CD8-positive, alpha-beta memory T cell (primary cell): ENCODE measurements at regions of chr11 and their contacts with region 1.

Region 1: DNA sequence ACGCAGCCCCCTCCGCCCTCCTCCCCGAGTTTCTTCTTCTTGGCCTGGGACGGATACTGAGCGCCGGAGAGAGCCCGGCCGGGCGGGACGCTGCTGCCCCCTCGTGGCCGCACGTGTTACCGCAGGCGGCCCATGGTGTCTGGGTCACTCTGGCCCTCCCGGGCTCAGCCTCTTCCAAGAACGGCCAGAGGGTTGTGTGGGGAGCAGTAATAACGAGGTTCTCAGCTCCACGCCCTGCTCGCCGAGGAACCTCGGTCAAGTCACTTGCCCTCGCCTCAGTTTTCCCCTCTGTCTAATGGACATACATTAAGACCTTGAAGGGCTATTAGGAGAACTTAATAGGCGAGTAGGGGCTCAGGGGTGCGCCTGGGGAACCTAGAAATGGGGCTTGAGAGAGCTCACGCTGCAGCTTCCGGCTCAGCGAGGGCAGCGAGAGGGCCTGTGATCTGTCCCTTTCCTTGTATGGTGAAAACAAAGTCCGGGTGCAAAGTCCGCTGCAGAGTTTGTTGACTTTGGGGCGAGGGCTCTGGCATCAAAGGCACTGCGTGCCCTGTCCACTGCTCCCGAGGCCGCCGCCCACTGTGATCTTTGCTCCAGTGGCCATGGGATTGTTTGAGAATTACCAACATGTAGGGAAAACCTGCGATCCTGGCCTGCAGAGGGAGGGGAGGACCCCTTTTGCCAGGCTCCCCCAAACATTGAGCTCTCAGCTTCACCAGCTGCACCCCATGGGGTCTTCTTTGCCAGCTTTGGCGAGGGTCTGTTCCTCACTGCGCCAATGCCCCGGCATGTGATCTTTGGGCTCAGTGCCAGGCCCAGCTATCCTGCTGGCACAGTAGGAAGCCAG is 14.4 kb upstream of the LRP5 start:
- DNase-seq: peak; percentile 56 to 74 (median 63)
- H3K4me3 ChIP-seq: no peak overlapping the region
- H3K4me3 Mint-ChIP-seq: no peak overlapping the region
- H3K27ac ChIP-seq: no peak overlapping the region
- H3K27ac Mint-ChIP-seq: no peak overlapping the region
- H3K4me1 ChIP-seq: no peaks in the 10 kb centered on the region
- H3K4me1 Mint-ChIP-seq: peaks cover 0 to 4% (median 0%) of the 10 kb centered on the region in 3 donors
- H3K27me3 ChIP-seq: no peaks in the 10 kb centered on the region
- H3K27me3 Mint-ChIP-seq: no peaks in the 10 kb centered on the region

Region 2: GRCh38 chr11:68038718-68039525 is 259.1 kb before region 1 on chr11 and contains the start of gene TCIRG1:
- CTCF ChIA-PET with region 1: no interaction called
- POLR2A ChIA-PET with region 1: no interaction called
- DNase-seq: peak; percentile 42 to 64 (median 48)
- H3K4me3 ChIP-seq: peak within 1 kb of the TSS; percentile 71
- H3K4me3 Mint-ChIP-seq: peak within 1 kb of the TSS; percentile 88 to 98 (median 92)
- H3K27ac ChIP-seq: peak within 1 kb of the TSS; percentile 92
- H3K27ac Mint-ChIP-seq: peak within 1 kb of the TSS; percentile 90 to 98 (median 95)
- H3K4me1 ChIP-seq: peaks cover 47% of the 10 kb centered on the region
- H3K4me1 Mint-ChIP-seq: peaks cover 21 to 40% (median 25%) of the 10 kb centered on the region in 3 donors
- H3K27me3 ChIP-seq: no peaks in the 10 kb centered on the region
- H3K27me3 Mint-ChIP-seq: no peaks in the 10 kb centered on the region
- total RNA-seq, gene TCIRG1: 108 to 126 TPM

Region 3: DNA sequence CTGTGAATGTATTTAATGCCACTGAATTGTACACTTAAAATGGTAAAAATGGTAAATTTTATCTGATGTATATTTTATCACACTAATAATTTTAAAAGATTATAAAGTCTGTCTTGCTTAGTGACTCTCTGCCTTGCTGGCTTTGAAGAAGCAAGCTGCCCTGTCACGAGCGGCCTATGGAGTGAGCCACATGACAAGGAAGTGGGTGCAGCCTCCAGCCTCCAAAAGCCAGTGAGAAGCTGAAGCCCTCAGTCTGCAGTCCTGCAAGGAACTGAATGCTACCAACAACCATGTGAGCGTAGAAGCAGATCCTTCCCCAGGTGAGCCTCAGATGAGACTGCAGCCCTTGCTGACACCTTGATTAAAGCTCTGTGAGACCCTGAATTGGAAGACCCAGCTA is 46.3 kb before region 1 on chr11:
- CTCF ChIA-PET with region 1: interaction called, 201 read pairs
- POLR2A ChIA-PET with region 1: interaction called, 3 read pairs
- DNase-seq: no peak
- H3K4me3 ChIP-seq: no peak overlapping the region
- H3K4me3 Mint-ChIP-seq: no peak overlapping the region
- H3K27ac ChIP-seq: no peak overlapping the region
- H3K27ac Mint-ChIP-seq: no peak overlapping the region
- H3K4me1 ChIP-seq: no peaks in the 10 kb centered on the region
- H3K4me1 Mint-ChIP-seq: no peaks in the 10 kb centered on the region
- H3K27me3 ChIP-seq: no peaks in the 10 kb centered on the region
- H3K27me3 Mint-ChIP-seq: peaks cover 2 to 5% of the 10 kb centered on the region in 2 donors

Region 4: GRCh38 chr11:68257475-68258362 is 40.3 kb before region 1 on chr11:
- CTCF ChIA-PET with region 1: interaction called, 201 read pairs
- POLR2A ChIA-PET with region 1: interaction called, 3 read pairs
- DNase-seq: peak; percentile 82 to 93 (median 88)
- H3K4me3 ChIP-seq: no peak overlapping the region
- H3K4me3 Mint-ChIP-seq: no peak overlapping the region
- H3K27ac ChIP-seq: no peak overlapping the region
- H3K27ac Mint-ChIP-seq: peak overlapping the region in 4 of 8 donors; percentile 1 to 68 (median 16)
- H3K4me1 ChIP-seq: peaks cover 4% of the 10 kb centered on the region
- H3K4me1 Mint-ChIP-seq: peaks cover 3 to 6% (median 4%) of the 10 kb centered on the region in 3 donors
- H3K27me3 ChIP-seq: no peaks in the 10 kb centered on the region
- H3K27me3 Mint-ChIP-seq: peaks cover 2 to 5% of the 10 kb centered on the region in 2 donors

Region 5: GRCh38 chr11:68266121-68266891 is 31.7 kb before region 1 on chr11:
- CTCF ChIA-PET with region 1: interaction called, 201 read pairs
- POLR2A ChIA-PET with region 1: no interaction called
- DNase-seq: no peak
- H3K4me3 ChIP-seq: no peak overlapping the region
- H3K4me3 Mint-ChIP-seq: no peak overlapping the region
- H3K27ac ChIP-seq: peak overlapping the region; percentile 47
- H3K27ac Mint-ChIP-seq: no peak overlapping the region
- H3K4me1 ChIP-seq: peaks cover 16% of the 10 kb centered on the region
- H3K4me1 Mint-ChIP-seq: peaks cover 24 to 28% (median 27%) of the 10 kb centered on the region in 3 donors
- H3K27me3 ChIP-seq: no peaks in the 10 kb centered on the region
- H3K27me3 Mint-ChIP-seq: no peaks in the 10 kb centered on the region

Region 6: GRCh38 chr11:68271781-68272608 is 26.0 kb before region 1 on chr11 and contains the start of gene C11orf24:
- CTCF ChIA-PET with region 1: interaction called, 25 read pairs
- POLR2A ChIA-PET with region 1: interaction called, 3 read pairs
- DNase-seq: peak; percentile 91 to 95 (median 93)
- H3K4me3 ChIP-seq: peak within 1 kb of the TSS; percentile 91
- H3K4me3 Mint-ChIP-seq: peak within 1 kb of the TSS; percentile 88 to 97 (median 94)
- H3K27ac ChIP-seq: peak within 1 kb of the TSS; percentile 93
- H3K27ac Mint-ChIP-seq: peak within 1 kb of the TSS; percentile 89 to 99 (median 98)
- H3K4me1 ChIP-seq: peaks cover 21% of the 10 kb centered on the region
- H3K4me1 Mint-ChIP-seq: peaks cover 28 to 39% (median 35%) of the 10 kb centered on the region in 3 donors
- H3K27me3 ChIP-seq: no peaks in the 10 kb centered on the region
- H3K27me3 Mint-ChIP-seq: peaks cover 0 to 1% of the 10 kb centered on the region in 2 donors
- total RNA-seq, gene C11orf24: 46.9 to 49.8 TPM

Region 7: GRCh38 chr11:68412593-68413475 is 114.8 kb after region 1 on chr11:
- CTCF ChIA-PET with region 1: no interaction called
- POLR2A ChIA-PET with region 1: no interaction called
- DNase-seq: no peak
- H3K4me3 ChIP-seq: no peak overlapping the region
- H3K4me3 Mint-ChIP-seq: no peak overlapping the region
- H3K27ac ChIP-seq: no peak overlapping the region
- H3K27ac Mint-ChIP-seq: peak overlapping the region in 1 of 8 donors; percentile 37
- H3K4me1 ChIP-seq: no peaks in the 10 kb centered on the region
- H3K4me1 Mint-ChIP-seq: peaks cover 0 to 6% (median 1%) of the 10 kb centered on the region in 3 donors
- H3K27me3 ChIP-seq: no peaks in the 10 kb centered on the region
- H3K27me3 Mint-ChIP-seq: no peaks in the 10 kb centered on the region